Psoas muscle (tissue), 8 donors: ENCODE measurements at regions of chr2 and their contacts with region 1.

Region 1: DNA sequence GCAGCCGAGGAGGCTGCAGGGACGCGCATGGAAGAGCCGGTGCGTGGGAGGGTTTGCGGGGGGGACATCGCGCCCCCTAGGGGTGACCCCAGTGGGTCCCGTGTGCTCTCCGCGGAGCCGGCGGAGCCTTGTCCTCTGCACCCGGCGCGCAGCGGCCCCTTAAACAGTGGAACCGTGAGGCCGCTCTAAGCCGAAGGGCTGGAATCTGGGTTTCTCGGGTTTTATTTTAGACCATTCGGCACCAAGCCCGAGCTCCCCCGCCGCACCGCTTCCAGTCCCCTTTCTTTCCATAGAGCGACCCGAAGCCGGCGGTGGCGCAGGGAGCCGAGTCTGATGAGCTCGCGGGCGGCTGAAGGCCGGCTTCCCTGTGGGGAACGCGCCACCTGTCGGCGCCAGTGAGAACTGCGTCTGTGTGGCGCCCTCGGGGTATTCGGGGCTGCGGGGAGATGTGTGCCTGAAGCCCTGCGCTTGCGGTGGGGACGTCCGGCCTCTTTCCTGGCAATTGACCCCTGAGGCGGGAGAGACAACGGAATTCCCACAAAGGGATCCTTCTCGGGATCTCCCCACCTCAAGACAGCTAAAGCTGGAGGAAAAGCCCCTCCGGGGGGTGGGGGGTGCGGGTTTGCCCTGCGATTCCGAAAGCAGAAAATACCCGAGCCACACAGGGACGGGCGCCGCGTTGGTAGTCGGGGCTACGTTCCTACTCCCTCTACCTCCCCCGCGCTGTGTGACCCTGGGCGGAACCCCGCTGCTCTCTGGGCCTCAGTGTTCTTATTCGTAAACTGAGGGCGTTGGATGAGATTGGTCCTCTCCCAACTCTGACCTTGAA is 8.2 kb upstream of the EN1 start:
- DNase-seq: peak; percentile 86 to 91
- ATAC-seq: peak; percentile 93 to 97 (median 96)
- H3K4me3 ChIP-seq: peak overlapping the region; percentile 58
- H3K27ac ChIP-seq: no peak overlapping the region
- H3K4me1 ChIP-seq: peaks cover 7% of the 10 kb centered on the region
- H3K27me3 ChIP-seq: peaks cover 0 to 93% (median 38%) of the 10 kb centered on the region in 3 donors
- CTCF ChIP-seq: peak; percentile 97

Region 2: GRCh38 chr2:118046634-118047210 is 808.9 kb before region 1 on chr2:
- intact Hi-C with region 1: loop called in 1 of 2 experiments (anchors 5 kb)
- DNase-seq: no peak
- ATAC-seq: peak in 1 of 4 donors; percentile 71
- H3K4me3 ChIP-seq: no peak overlapping the region
- H3K27ac ChIP-seq: no peak overlapping the region
- H3K4me1 ChIP-seq: no peaks in the 10 kb centered on the region
- H3K27me3 ChIP-seq: peaks cover 0 to 19% (median 0%) of the 10 kb centered on the region in 3 donors
- CTCF ChIP-seq: peak; percentile 55

Region 3: DNA sequence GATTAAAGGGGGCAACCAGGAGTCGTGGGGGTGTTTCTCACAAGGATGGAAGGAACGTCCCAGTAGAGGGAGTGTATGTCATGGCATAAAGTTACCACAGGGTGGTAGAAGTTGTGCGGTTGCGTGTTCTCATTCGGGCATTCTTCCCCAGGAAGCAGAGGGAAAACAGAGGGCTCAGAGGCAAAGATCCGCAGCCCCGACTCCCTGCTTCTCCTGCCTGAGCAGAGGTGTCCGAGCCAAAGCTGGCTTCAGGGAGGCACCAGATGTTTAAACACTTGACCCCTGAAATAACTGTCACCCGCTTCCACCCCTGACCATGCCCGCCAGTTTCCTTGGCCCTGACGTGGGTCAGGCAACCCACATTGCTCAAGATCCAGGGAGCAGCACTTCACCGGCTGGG is 91.9 kb before region 1 on chr2:
- intact Hi-C with region 1: loop called (anchors 1 to 2 kb)
- DNase-seq: no peak
- ATAC-seq: peak; percentile 81 to 98 (median 92)
- H3K4me3 ChIP-seq: no peak overlapping the region
- H3K27ac ChIP-seq: no peak overlapping the region
- H3K4me1 ChIP-seq: no peaks in the 10 kb centered on the region
- H3K27me3 ChIP-seq: no peaks in the 10 kb centered on the region
- CTCF ChIP-seq: peak; percentile 50